ENCODE measurements at regions of chr12 and their contacts with region 1.

Region 1: DNA sequence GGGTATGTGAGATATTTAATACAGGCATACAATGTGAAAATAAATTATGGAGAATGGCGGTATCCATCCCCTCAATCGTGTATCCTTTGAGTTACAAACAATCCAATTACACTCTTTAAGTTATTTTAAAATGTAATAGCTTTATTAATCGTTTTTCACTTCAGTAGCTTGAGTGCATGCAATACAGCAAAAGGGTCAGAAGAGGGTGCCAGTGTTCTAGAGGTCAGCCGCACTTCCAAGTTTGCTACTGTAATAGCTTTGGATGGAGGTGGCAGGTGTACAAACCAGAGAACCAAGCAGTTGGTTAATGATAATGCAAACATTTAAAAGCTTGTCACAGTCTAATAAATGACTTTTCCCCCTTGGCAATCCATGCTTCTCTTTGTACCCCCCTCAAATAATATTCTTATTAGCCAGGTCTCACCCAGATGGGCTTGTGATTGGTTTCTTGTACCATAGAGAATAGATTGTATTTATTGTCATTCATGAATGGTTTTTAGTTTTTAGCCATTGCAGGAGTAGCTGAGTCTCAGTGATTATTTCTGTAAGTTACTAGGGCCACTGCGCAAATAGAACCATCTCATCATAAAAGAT is 127.0 kb downstream of the ERC1 start:
- DNase-seq: peak; percentile 63
- H3K4me3 ChIP-seq: no peak overlapping the region
- H3K27ac ChIP-seq: no peak overlapping the region
- H3K27me3 ChIP-seq: no peaks in the 10 kb centered on the region
- CTCF ChIP-seq: peak; percentile 93

Region 2: DNA sequence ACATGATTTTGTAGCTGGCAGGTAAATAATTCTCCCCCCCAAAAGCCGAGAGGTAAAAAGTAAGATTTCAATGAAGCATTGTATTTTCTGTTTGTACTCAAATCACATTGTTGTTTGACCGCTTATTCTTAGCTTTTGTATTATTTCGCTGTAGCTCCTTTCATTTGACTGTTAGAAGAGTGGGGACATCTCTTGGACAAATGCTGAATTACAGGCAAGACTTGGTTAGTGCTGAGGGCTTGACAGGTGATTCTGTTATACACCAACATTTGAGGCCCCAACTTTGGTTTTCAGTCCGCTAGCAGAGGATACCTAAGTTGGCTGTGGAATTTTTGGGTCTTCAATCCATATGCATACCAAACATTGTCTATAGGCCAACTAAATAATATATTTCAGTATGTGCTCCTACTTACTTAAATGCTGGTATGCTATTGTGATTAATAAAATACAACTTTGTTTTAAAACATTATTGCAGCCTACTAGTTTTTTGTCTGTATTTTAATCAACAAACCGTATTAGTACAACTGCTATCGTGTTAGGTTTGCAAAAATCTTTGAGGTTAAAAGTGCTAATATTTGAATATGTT is 24.8 kb before region 1 on chr12:
- CTCF ChIA-PET with region 1: interaction called, 17 read pairs
- POLR2A ChIA-PET with region 1: no interaction called
- DNase-seq: peak; percentile 24
- H3K4me3 ChIP-seq: no peak overlapping the region
- H3K27ac ChIP-seq: no peak overlapping the region
- H3K27me3 ChIP-seq: no peaks in the 10 kb centered on the region
- CTCF ChIP-seq: peak; percentile 86

Region 3: DNA sequence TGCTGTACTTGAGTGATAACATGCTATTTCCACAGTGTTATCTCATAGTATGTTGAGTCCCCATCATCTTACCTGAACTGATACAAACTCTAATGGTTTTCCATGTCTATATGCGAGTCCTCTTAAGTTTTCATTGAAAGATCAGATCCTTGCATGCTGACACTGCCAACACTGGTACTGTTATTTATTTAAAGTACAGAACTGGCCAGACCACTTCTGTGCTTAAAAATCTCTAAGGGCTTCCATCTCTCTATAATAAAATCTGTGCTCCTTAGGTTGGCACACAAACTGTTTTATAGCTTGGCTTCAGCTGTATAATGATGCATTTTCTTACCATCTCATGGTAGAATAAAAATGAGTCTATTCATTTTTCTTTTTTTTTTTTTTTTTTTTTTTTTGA is 61.1 kb after region 1 on chr12:
- CTCF ChIA-PET with region 1: interaction called, 20 read pairs
- POLR2A ChIA-PET with region 1: no interaction called
- DNase-seq: no peak
- H3K4me3 ChIP-seq: no peak overlapping the region
- H3K27ac ChIP-seq: no peak overlapping the region
- H3K27me3 ChIP-seq: no peaks in the 10 kb centered on the region
- CTCF ChIP-seq: no peak

Region 4: DNA sequence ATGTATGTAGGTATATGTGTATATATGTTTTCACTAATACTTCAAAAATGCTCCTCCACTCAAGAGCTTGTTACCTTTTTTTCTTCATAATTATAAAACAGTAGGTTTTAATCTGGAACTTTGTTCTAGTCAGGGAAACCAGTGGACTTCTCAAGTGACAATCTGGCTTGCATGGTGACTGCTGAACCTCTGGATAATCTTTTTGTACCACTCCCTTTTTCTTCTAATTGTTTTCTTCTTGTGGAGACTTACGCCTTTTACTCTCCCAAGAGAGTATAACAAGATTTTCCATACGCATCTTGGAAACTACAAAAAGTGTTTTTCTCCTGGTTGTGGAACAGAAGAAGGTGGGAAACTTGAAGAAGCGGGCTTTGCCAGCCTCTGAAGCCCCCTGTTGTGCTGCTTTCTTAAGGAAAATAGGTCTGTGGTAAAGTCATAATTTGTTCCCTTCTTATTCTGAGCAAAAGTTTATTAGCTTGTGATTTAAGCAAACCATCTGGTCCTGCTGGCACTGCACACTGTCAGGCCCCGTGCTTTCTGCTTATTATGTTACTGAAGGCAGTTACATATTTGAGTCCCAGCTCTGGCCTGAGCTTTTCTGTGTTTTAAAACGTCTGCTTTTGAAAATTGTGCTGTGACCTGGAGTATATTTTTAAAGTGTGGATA is 164.7 kb after region 1 on chr12:
- CTCF ChIA-PET with region 1: interaction called, 13 read pairs
- POLR2A ChIA-PET with region 1: no interaction called
- DNase-seq: no peak
- H3K4me3 ChIP-seq: no peak overlapping the region
- H3K27ac ChIP-seq: no peak overlapping the region
- H3K27me3 ChIP-seq: no peaks in the 10 kb centered on the region
- CTCF ChIP-seq: no peak

Region 5: DNA sequence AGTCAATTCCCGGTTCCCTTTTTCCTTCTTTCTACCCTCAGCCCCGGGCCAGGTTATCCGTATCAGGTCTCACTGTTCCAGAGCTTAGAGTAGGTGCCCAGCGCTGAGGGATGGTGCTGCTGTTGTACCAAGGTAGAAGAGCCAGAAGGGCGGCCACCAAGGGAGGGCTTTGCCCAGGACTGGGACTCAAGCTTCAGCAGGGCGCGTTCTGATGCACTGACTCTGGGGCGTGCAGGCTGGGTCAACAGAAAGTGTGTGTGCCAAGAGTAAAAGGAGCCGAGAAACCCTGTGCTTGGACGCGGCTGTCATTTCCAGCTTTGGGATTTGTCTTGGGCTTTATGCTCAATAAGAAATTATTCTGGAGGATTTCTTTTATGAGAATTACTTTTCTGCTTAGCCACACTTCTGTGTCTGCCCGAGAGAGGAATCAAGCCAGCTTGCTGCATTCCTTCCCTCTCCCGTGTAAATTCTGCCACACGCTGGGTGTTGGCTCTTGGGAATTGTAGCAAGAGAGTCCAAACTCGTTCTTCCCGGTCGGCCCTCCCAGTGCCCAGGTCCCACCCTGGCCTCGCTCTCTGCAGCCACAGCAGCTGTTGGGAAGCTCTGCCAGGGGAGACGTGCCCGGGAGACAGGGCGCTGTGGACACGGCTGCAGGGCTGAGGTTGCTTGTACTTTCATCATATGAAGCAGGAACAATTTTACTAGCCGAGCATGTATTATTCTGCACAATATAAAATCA is 378.3 kb after region 1 on chr12:
- CTCF ChIA-PET with region 1: interaction called, 12 read pairs
- POLR2A ChIA-PET with region 1: no interaction called
- DNase-seq: no peak
- H3K4me3 ChIP-seq: peak overlapping the region; percentile 31
- H3K27ac ChIP-seq: peak overlapping the region; percentile 52
- H3K27me3 ChIP-seq: no peaks in the 10 kb centered on the region
- CTCF ChIP-seq: no peak

Region 6: GRCh38 chr12:1583421-1584078 is 465.5 kb after region 1 on chr12:
- CTCF ChIA-PET with region 1: interaction called, 313 read pairs
- POLR2A ChIA-PET with region 1: interaction called, 4 read pairs
- DNase-seq: peak; percentile 86
- H3K4me3 ChIP-seq: peak overlapping the region; percentile 30; the same call in 1 of the 2 replicates
- H3K27ac ChIP-seq: no peak overlapping the region
- H3K27me3 ChIP-seq: no peaks in the 10 kb centered on the region
- CTCF ChIP-seq: peak; percentile 90

Region 7: GRCh38 chr12:1644534-1645438 is 526.7 kb after region 1 on chr12:
- CTCF ChIA-PET with region 1: interaction called, 10 read pairs
- POLR2A ChIA-PET with region 1: no interaction called
- DNase-seq: peak; percentile 55
- H3K4me3 ChIP-seq: 0 out of 2 replicates have a peak overlapping the region, but pooled peaks have one; percentile 17
- H3K27ac ChIP-seq: no peak overlapping the region
- H3K27me3 ChIP-seq: no peaks in the 10 kb centered on the region
- CTCF ChIP-seq: no peak

Region 8: DNA sequence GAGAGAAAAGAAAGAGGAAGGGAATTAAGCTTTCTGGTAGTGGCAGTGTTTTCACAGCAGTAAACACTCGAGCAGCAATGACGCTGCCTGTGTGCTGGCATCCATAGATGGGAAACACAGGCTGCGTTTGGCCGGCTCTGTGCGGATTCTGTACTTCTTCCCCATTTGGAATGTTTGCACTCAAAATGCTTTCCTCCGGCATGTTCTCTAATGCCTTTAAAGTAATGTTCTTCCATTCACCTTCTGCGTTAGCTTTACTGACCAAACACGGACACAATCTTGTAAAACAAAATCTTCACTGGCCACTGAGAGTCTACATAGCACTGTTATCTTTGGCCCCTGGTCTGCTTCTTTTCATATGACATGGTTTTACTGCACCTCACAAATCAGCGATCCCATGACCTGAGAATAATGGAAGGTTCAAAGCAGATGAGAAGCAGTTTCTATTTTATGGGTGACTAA is 854.8 kb after region 1 on chr12:
- CTCF ChIA-PET with region 1: no interaction called
- POLR2A ChIA-PET with region 1: no interaction called
- DNase-seq: peak; percentile 20
- H3K4me3 ChIP-seq: peak overlapping the region; percentile 18
- H3K27ac ChIP-seq: peak overlapping the region; percentile 23
- H3K27me3 ChIP-seq: no peaks in the 10 kb centered on the region
- CTCF ChIP-seq: no peak